ENCODE measurements at regions of chr9 and their contacts with region 1.

Region 1: GRCh38 chr9:70111042-70111602 is 67.5 kb downstream of the MAMDC2 start:
- DNase-seq: peak; percentile 57
- H3K4me3 ChIP-seq: no peak overlapping the region
- H3K27ac ChIP-seq: peak overlapping the region; percentile 58
- H3K4me1 ChIP-seq: peaks cover 56% of the 10 kb centered on the region
- H3K27me3 ChIP-seq: no peaks in the 10 kb centered on the region
- CTCF ChIP-seq: peak; percentile 89 to 91

Region 2: GRCh38 chr9:69809304-69809863 is 301.7 kb before region 1 on chr9:
- CTCF ChIA-PET with region 1: no interaction called
- dilution Hi-C with region 1: no loop called
- in situ Hi-C with region 1: no loop called
- intact Hi-C with region 1: loop called (anchors 2 kb)
- DNase-seq: peak; percentile 17
- H3K4me3 ChIP-seq: no peak overlapping the region
- H3K27ac ChIP-seq: no peak overlapping the region
- H3K4me1 ChIP-seq: no peaks in the 10 kb centered on the region
- H3K27me3 ChIP-seq: no peaks in the 10 kb centered on the region
- CTCF ChIP-seq: peak; percentile 38 to 41

Region 3: DNA sequence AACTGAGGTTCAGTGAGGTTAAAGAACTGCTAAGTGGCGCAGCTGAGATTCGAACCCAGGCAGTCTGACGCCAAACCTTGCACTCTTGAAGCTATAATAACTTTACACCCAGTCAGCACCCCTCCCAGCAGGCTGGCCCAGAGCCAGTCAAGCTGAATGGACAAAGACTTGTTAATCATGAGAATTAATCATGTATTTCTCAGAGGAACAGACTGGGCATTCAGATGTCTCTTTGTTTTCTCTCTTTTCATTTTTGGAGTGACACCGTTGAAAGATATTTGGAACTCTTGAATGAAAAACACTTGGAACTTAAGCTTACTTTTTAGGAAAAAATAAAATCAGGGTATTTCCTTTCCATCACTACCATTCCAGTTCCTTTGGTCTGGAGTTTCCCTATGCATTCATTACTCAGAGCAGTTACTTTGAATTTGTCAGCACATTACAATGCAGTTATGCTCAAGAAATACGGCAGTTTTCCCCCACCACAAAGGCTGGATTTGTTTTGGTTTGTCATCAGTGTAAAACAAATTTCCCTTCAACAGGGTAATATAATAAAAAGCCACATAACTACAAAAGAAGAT is 90.0 kb before region 1 on chr9:
- CTCF ChIA-PET with region 1: interaction called, 3 read pairs
- dilution Hi-C with region 1: no loop called
- in situ Hi-C with region 1: no loop called
- intact Hi-C with region 1: loop called (anchors 1 kb)
- DNase-seq: peak; percentile 95
- H3K4me3 ChIP-seq: no peak overlapping the region
- H3K27ac ChIP-seq: peak overlapping the region; percentile 95
- H3K4me1 ChIP-seq: peaks cover 28% of the 10 kb centered on the region
- H3K27me3 ChIP-seq: no peaks in the 10 kb centered on the region
- CTCF ChIP-seq: no peak

Region 4: DNA sequence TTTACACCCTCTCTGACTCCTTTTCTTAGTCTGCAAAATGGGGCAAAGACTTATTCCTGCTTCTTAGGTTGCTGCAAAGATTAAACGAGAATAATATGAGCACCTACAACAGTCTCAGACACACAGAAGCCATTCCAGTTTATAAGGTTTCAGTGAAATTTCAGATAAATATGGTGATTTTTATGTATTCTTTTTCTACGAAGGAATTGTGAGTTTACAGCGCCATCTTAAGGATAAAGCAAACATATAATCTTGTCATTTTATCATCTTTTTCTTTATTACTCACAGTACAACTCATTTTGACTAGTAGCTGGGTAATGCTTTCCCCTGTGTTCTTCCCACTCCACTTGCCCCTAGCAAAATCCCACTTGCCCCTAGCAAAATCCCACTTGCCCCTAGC is 118.5 kb after region 1 on chr9:
- CTCF ChIA-PET with region 1: no interaction called
- dilution Hi-C with region 1: no loop called
- in situ Hi-C with region 1: no loop called
- intact Hi-C with region 1: loop called (anchors 2 kb)
- DNase-seq: peak; percentile 13
- H3K4me3 ChIP-seq: no peak overlapping the region
- H3K27ac ChIP-seq: no peak overlapping the region
- H3K4me1 ChIP-seq: no peaks in the 10 kb centered on the region
- H3K27me3 ChIP-seq: no peaks in the 10 kb centered on the region
- CTCF ChIP-seq: peak; percentile 40